CD8-positive, alpha-beta T cell (primary cell): ENCODE measurements at regions of chr1 and their contacts with region 1.

Region 1: DNA sequence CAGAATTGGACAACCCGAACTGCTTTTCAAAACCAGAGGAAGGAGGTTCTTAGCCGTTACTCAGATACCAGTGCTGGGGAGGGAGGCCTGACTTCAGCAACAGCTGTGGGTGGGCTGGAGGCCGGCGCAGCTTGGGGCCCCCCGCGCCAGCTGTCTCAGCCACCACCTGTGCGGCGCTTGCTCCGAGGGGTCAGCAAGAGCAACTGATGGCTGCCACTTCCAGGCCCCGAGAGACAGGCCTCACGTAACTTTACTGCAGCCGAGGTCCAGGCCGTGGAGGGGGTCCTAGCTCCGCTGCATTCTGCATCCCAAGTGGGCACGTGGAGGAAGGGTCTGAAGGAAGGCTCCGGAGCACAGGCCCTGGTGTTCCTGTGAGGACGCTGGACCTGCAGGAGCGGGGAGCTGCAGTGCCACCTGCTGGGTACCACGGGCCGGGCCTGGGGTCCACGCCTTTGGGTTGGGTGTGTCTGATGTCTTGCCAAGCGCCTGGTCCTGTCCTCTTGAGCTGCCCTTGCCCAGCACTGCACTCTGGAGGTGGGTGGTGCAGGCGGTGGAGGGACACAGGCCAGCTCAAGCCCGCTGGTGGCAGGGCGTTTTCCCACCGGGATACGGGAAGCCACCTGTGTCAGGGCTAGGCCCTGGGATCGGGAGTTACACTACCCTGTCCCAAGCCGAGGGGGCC is 9.8 kb downstream of the THAP3 start:
- DNase-seq: peak in 8 of 9 experiments; percentile 24 to 66 (median 50)
- ATAC-seq: peak; percentile 64
- H3K4me3 ChIP-seq: no peak overlapping the region
- H3K4me3 Mint-ChIP-seq: no peak overlapping the region
- H3K27ac ChIP-seq: no peak overlapping the region
- H3K27ac Mint-ChIP-seq: no peak overlapping the region
- H3K4me1 ChIP-seq: no peaks in the 10 kb centered on the region
- H3K4me1 Mint-ChIP-seq: peaks cover under 1% of the 10 kb centered on the region
- H3K27me3 ChIP-seq: no peaks in the 10 kb centered on the region
- H3K27me3 Mint-ChIP-seq: no peaks in the 10 kb centered on the region
- CTCF ChIP-seq: peak; percentile 29

Region 2: DNA sequence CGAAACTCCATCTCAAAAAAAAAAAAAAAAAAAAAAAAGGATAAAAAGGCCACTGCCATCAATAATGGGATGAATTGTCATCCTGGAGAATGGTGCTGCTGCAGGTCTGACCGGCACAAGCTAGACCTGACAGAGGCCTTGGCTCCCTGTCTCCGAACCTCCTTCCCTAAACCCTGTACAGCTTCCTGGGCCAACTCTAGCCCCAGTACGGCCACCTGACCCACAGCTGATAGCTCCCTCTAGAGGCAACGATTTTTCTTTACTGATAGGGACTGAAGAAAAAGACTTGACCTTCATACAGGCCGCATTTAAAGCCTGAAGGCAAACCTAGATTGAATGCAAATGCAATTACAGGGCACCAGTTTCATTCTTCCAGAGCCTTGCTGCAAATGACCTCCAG is 110.9 kb before region 1 on chr1:
- CTCF ChIA-PET with region 1: no interaction called
- POLR2A ChIA-PET with region 1: no interaction called
- intact Hi-C with region 1: no loop called
- DNase-seq: peak in 1 of 9 experiments; percentile 22
- ATAC-seq: no peak
- H3K4me3 ChIP-seq: no peak overlapping the region
- H3K4me3 Mint-ChIP-seq: no peak overlapping the region
- H3K27ac ChIP-seq: no peak overlapping the region
- H3K27ac Mint-ChIP-seq: peak overlapping the region; percentile 19
- H3K4me1 ChIP-seq: no peaks in the 10 kb centered on the region
- H3K4me1 Mint-ChIP-seq: no peaks in the 10 kb centered on the region
- H3K27me3 ChIP-seq: no peaks in the 10 kb centered on the region
- H3K27me3 Mint-ChIP-seq: no peaks in the 10 kb centered on the region
- CTCF ChIP-seq: peak; percentile 27

Region 3: GRCh38 chr1:6646499-6647148 is 12.1 kb after region 1 on chr1:
- CTCF ChIA-PET with region 1: interaction called, 24 read pairs
- POLR2A ChIA-PET with region 1: interaction called, 3 read pairs
- intact Hi-C with region 1: no loop called
- DNase-seq: peak in 6 of 9 experiments; percentile 8 to 69 (median 30)
- ATAC-seq: peak; percentile 74
- H3K4me3 ChIP-seq: no peak overlapping the region
- H3K4me3 Mint-ChIP-seq: no peak overlapping the region
- H3K27ac ChIP-seq: no peak overlapping the region
- H3K27ac Mint-ChIP-seq: no peak overlapping the region
- H3K4me1 ChIP-seq: no peaks in the 10 kb centered on the region
- H3K4me1 Mint-ChIP-seq: peaks cover 3% of the 10 kb centered on the region
- H3K27me3 ChIP-seq: no peaks in the 10 kb centered on the region
- H3K27me3 Mint-ChIP-seq: no peaks in the 10 kb centered on the region
- CTCF ChIP-seq: peak; percentile 64

Region 4: DNA sequence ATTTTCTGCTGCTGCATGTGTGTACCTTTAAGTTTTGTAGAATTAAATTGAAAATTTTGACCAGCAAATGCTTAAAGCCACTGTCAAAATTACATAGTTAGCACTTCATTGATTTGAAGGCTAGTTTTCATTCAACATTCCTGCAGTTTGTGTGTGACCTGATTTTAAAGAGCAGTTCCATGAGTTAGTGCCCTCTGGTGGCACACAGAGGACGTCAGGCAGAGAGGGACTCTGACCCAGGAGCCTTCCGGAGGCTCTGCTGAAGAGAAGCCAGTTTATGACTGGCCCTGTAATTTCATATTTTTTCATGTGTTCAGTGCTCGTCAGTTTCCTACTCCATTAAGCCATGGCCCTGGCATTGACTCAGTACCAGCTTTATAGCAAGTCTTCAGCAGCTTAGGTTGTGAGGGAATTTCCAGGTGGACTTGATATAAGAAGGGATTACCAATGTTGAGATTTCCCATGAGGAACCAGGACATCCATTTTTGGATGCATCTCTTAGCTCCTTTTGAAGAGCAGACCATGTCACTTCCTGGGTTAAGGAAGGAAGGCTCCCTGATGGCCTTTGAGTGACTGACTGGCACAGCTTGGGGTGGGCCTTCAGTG is 255.5 kb after region 1 on chr1:
- CTCF ChIA-PET with region 1: no interaction called
- POLR2A ChIA-PET with region 1: no interaction called
- intact Hi-C with region 1: no loop called
- DNase-seq: peak in 7 of 9 experiments; percentile 12 to 57 (median 37)
- ATAC-seq: no peak
- H3K4me3 ChIP-seq: no peak overlapping the region
- H3K4me3 Mint-ChIP-seq: no peak overlapping the region
- H3K27ac ChIP-seq: no peak overlapping the region
- H3K27ac Mint-ChIP-seq: no peak overlapping the region
- H3K4me1 ChIP-seq: no peaks in the 10 kb centered on the region
- H3K4me1 Mint-ChIP-seq: no peaks in the 10 kb centered on the region
- H3K27me3 ChIP-seq: no peaks in the 10 kb centered on the region
- H3K27me3 Mint-ChIP-seq: no peaks in the 10 kb centered on the region
- CTCF ChIP-seq: peak; percentile 43

Region 5: GRCh38 chr1:6984986-6985385 is 350.5 kb after region 1 on chr1:
- CTCF ChIA-PET with region 1: no interaction called
- POLR2A ChIA-PET with region 1: no interaction called
- intact Hi-C with region 1: no loop called
- DNase-seq: no peak
- ATAC-seq: no peak
- H3K4me3 ChIP-seq: no peak overlapping the region
- H3K4me3 Mint-ChIP-seq: no peak overlapping the region
- H3K27ac ChIP-seq: no peak overlapping the region
- H3K27ac Mint-ChIP-seq: no peak overlapping the region
- H3K4me1 ChIP-seq: no peaks in the 10 kb centered on the region
- H3K4me1 Mint-ChIP-seq: no peaks in the 10 kb centered on the region
- H3K27me3 ChIP-seq: no peaks in the 10 kb centered on the region
- H3K27me3 Mint-ChIP-seq: peaks cover 9% of the 10 kb centered on the region
- CTCF ChIP-seq: no peak